ENCODE measurements at regions of chr5 and their contacts with region 1.

Region 1: DNA sequence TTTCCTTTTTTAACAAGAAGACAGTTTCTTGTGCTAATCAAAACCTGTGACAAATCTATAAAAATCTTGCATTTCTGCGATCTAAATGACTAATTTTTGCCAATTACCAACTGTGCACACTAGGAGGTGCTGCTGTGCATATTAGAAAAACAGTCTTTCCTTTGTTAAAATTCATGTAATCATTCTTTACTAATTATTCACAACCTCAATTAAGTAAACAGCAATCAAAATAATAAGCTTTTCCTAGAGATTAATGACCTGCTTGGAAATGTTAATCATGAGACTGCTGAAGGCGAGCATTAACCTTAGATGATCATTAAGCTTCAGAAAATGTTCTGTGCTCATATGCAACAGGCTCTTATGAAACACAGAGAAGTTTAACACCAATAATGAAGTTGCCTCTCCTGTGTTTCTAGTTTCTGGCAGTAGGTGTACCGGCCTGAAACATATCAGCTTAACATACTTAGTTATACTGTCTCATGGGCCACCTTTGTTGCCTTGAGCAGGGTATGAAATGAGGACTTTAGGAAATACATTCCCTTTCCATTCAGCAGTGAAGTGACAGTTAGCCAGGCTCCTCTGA is 17.7 kb downstream of the RFESD start:
- DNase-seq: peak; percentile 78
- H3K4me3 Mint-ChIP-seq: no peak overlapping the region
- H3K27ac Mint-ChIP-seq: no peak overlapping the region
- H3K4me1 Mint-ChIP-seq: peaks cover 2% of the 10 kb centered on the region
- H3K27me3 Mint-ChIP-seq: peaks cover 13% of the 10 kb centered on the region

Region 2: GRCh38 chr5:95781101-95781583 is 116.8 kb after region 1 on chr5:
- intact Hi-C with region 1: loop called (anchors 2 kb)
- DNase-seq: peak; percentile 90
- H3K4me3 Mint-ChIP-seq: peak overlapping the region; percentile 56
- H3K27ac Mint-ChIP-seq: no peak overlapping the region
- H3K4me1 Mint-ChIP-seq: peaks cover 16% of the 10 kb centered on the region
- H3K27me3 Mint-ChIP-seq: peaks cover 7% of the 10 kb centered on the region